Posterior vena cava (tissue), 2 donors: ENCODE measurements at regions of chr5 and their contacts with region 1.

Region 1: GRCh38 chr5:671459-672328 is 21.5 kb downstream of the TPPP start:
- DNase-seq: peak; percentile 93

Region 2: GRCh38 chr5:431001-431710 is 240.5 kb before region 1 on chr5:
- intact Hi-C with region 1: no loop called
- DNase-seq: peak; percentile 81

Region 3: DNA sequence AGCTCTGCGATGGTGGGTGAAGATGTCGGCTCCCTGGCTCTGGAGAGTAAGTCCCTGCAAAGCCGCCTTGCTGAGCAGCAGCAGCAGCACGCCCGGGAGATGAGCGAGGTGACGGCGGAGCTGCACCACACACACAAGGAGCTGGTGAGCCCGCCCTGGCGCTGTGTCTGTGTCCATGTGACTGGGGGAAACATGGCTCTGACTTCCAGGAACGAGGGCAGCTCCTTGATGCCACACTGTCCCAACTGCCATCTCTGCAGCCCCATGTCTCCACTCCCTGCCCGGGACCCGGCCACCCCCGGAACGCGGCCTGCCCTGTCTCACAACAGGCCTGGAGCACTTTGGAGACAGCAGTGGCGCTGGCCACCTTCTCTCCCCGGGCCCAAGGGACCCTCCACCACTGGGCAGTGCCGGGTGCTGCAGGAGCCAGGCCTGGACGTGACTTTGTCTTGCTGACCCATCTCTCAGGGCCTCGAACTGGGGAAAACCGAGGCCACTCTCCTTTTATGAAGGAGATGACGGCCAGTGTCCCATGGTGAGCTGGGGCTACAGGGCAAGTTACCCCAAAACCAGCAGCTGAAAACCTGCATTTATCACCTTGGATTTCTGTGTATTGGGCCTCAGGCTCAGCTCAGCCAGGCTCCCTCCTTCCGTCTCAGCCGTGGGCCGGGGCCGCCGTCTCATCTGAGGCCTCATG is 31.1 kb before region 1 on chr5:
- intact Hi-C with region 1: loop called in 1 of 2 experiments (anchors 1 kb)
- DNase-seq: peak; percentile 71

Region 4: DNA sequence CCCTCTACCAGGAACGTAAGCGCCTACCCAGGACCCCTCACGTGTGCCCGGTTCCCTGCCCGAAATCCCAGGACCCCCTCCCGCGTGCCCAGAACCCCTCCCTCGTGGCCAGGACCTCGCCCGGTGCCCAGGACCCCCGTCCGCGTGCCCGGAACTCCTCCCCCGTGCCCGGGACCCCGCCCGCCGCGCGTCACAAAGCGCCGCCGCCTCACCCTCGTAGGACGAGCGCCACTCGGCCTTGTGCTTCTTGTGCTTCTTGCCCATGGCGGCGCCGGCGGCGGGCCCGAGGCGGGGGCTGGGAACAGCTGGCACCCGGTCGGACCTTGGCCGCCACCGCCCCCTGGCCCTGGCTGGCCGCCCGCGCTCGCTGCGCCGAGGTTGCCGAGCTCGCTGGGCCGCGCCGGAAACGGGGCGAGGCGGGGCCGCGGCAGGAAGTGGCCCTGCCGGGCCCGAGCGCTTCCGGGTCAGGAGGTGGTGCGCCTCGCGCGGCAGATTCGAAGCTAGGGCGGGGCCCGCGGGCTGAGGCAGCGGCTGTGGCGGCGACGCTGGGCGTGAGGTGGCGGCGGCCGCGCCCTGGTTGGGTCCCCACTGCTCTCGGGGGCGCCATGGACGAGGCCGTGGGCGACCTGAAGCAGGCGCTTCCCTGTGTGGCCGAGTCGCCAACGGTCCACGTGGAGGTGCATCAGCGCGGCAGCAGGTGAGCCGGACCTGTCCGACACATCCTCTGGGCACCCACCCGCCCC is 220.9 kb after region 1 on chr5 and contains the starts of genes BRD9 and TRIP13:
- intact Hi-C with region 1: loop called (anchors 5 kb)
- DNase-seq: peak; percentile 93
- total RNA-seq, gene BRD9: 28.6 to 36.0 TPM
- total RNA-seq, gene TRIP13: 0.95 to 1.6 TPM